ENCODE measurements at regions of chr7 and their contacts with region 1.

Region 1: DNA sequence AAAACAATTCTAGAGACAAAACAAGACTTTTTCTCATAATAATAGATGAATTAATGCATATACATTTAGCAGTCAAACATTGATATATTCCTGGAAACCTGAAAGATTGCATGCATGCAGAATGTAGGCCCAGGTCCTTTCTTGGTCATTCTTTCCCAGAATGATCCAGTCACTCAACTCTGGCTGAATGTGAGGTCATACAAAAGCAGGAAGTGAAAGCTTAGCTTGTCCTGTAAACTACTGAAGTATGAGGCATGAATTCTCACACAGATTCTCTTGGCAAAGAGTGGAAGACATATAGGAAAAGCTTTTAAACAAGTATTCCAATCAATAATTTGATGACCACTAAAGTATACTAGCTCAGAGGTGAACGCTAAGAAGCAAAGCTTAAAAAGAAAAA is 253.9 kb downstream of the PPP1R3A start:
- DNase-seq: no peak
- ATAC-seq: no peak
- H3K4me3 ChIP-seq: no peak overlapping the region
- H3K27ac ChIP-seq: no peak overlapping the region
- H3K4me1 ChIP-seq: no peaks in the 10 kb centered on the region
- H3K27me3 ChIP-seq: no peaks in the 10 kb centered on the region
- CTCF ChIP-seq: no peak

Region 2: DNA sequence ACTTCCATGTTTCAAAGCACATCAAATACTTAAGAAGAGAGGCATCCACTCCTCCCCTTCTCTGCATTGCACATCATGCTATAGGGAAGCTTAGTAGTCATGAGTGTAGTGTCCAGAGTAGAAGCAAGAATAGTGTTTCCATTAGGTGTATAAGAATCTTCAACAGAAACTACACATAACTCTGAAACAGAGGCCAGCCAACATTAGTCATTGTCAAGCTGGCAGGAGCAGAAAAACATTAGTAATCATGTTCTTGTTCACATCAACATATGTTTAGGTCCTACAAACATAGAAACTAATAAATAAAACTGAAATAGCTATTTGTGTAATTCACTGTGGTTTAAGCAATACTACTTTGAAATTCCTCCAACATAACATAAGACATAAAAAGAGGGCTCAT is 116.3 kb before region 1 on chr7:
- CTCF ChIA-PET with region 1: no interaction called
- POLR2A ChIA-PET with region 1: no interaction called
- in situ Hi-C with region 1: no loop called
- intact Hi-C with region 1: no loop called
- DNase-seq: no peak
- ATAC-seq: no peak
- H3K4me3 ChIP-seq: no peak overlapping the region
- H3K27ac ChIP-seq: no peak overlapping the region
- H3K4me1 ChIP-seq: no peaks in the 10 kb centered on the region
- H3K27me3 ChIP-seq: no peaks in the 10 kb centered on the region
- CTCF ChIP-seq: no peak

Region 3: DNA sequence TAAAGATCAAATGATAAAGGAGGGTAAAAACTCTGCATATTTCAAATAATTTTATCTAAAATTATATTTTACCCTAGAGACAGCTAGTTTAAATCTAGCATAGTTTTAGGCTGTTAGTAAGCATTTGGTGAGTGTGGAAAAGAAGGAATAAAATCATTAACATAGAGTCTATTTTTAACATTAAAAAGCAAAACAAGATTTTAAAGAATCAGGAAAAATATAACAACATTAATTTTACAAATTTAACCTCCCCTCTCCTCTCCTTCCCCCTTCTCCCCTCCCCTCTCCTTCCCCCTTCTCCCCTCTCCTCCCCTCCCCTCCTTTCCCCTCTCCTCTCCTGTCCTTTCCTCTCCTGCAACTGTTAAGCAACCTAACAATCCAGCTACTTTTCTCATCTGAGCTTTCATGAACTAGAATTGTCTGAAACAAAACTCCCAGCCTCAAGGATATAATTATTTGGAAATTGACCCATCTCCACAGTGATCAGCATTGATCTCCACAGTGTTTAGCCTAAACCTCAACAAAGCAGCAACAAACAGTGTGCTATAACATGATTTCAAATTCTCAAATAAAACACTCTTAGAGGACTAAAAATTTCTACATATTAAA is 39.3 kb before region 1 on chr7:
- CTCF ChIA-PET with region 1: no interaction called
- POLR2A ChIA-PET with region 1: interaction called, 11 read pairs
- in situ Hi-C with region 1: no loop called
- intact Hi-C with region 1: no loop called
- DNase-seq: no peak
- ATAC-seq: no peak
- H3K4me3 ChIP-seq: no peak overlapping the region
- H3K27ac ChIP-seq: no peak overlapping the region
- H3K4me1 ChIP-seq: no peaks in the 10 kb centered on the region; the same call in 1 of the 2 replicates
- H3K27me3 ChIP-seq: no peaks in the 10 kb centered on the region
- CTCF ChIP-seq: no peak

Region 4: GRCh38 chr7:113652501-113652900 is 12.4 kb before region 1 on chr7:
- CTCF ChIA-PET with region 1: no interaction called
- POLR2A ChIA-PET with region 1: no interaction called
- in situ Hi-C with region 1: no loop called
- intact Hi-C with region 1: no loop called
- DNase-seq: no peak
- ATAC-seq: no peak
- H3K4me3 ChIP-seq: no peak overlapping the region
- H3K27ac ChIP-seq: no peak overlapping the region
- H3K4me1 ChIP-seq: no peaks in the 10 kb centered on the region
- H3K27me3 ChIP-seq: no peaks in the 10 kb centered on the region
- CTCF ChIP-seq: no peak

Measured in Panc1 (cell line).